ENCODE measurements at regions of chr12 and their contacts with region 1.

Region 1: GRCh38 chr12:123043536-123044001 is 63.1 kb downstream of the ARL6IP4 start:
- DNase-seq: peak; percentile 93 to 97 (median 97)
- H3K4me3 ChIP-seq: peak overlapping the region in 3 of 7 experiments; percentile 6 to 29 (median 26)
- H3K27ac ChIP-seq: peak overlapping the region; percentile 40 to 78
- H3K4me1 ChIP-seq: peaks cover 6 to 52% (median 32%) of the 10 kb centered on the region in 4 experiments
- H3K27me3 ChIP-seq: no peaks in the 10 kb centered on the region

Region 2: DNA sequence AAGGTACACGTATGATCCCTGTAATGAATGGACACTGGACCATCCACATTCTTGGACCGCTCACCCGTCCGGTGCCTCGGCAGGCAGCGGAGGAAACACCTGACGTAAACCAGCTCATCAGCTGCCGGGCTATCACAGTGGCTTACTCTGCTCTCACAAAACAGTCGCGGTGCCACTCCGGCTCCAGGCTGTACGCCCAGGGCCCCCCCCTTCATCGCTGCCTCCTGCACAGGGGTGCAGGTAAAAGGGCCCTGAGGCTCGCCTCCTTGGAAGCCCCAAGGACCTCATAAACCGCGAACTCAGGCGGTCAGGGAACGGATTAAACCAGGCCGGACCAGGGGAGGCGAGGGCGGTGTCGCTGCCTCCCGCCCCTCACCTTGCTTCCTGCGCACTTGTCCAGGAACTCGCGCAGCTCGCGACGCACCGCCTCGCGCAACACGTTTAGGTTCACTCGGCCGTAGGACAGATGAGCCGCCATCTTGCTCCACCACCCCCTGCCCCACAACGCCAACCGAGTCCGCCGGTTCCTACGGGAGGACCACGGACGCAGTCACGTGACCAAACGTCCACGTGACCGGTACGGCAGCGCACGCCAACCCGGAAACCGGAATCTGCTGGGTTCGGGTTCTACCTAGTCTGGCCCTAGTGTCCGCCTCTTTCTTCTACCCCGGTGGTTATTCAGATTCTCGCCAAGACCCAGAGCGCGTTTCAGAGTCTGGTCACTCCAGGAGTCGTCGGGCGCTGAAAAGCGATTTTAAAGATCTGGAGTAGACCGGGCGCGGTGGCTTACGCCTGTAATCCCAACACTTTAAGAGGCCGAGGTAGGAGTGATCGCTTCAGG is 777.4 kb before region 1 on chr12 and contains the start of gene VPS33A:
- CTCF ChIA-PET with region 1: no interaction called
- POLR2A ChIA-PET with region 1: no interaction called
- DNase-seq: peak; percentile 98 to 99 (median 98)
- H3K4me3 ChIP-seq: peak within 1 kb of the TSS; percentile 76 to 99 (median 91)
- H3K27ac ChIP-seq: peak within 1 kb of the TSS; percentile 88 to 94
- H3K4me1 ChIP-seq: peaks cover 11 to 16% (median 13%) of the 10 kb centered on the region in 4 experiments
- H3K27me3 ChIP-seq: no peaks in the 10 kb centered on the region

Region 3: DNA sequence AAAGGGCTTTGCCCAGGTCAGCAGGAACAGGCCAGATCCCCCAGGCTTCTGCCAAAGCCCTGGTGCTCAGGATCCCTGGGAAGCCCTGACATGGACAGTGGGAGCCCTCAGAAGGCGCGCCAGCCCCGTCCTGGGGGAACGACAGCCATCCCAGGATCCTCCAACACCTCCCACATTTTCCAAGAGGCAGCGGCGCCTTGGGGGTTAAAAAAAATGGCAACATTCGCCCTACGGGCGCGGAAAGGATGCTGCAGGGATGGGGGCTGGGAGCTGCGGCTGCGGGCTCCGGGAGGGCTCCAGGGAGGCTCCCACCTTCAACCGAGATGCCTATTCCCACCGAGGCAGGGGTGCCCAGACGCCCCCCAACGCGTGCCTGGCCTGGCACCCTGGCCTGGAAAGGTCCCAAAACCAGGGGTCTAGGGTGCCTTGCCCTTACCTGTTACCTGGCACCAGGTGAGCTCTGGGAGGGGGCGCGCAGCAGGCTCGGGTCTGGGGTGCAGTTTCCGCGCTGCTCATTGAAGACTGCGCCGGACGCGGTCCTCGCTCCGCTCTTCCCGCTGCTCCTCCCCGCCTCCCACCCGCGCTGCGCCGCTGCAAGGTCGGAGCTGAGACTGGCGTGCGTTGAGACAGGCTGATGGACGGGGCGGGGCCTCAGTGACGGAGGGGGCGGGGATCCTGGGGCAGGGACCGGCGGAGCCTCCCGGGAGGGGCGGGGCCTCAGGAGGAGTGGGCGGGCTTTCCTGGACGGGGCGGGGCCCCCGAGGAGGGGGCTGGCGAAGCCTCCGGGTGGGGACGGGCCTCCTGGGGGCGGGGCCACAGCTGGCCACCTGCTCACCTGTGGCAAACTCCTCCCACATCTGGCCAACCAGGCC is 77.5 kb before region 1 on chr12 and contains the start of gene ABCB9:
- CTCF ChIA-PET with region 1: no interaction called
- POLR2A ChIA-PET with region 1: no interaction called
- DNase-seq: peak; percentile 92 to 94 (median 93)
- H3K4me3 ChIP-seq: peak within 1 kb of the TSS in 6 of 7 experiments; percentile 57 to 75 (median 72)
- H3K27ac ChIP-seq: peak within 1 kb of the TSS in 1 of 2 experiments; percentile 49
- H3K4me1 ChIP-seq: peaks cover 0 to 22% (median 13%) of the 10 kb centered on the region in 4 experiments
- H3K27me3 ChIP-seq: no peaks in the 10 kb centered on the region

Region 4: DNA sequence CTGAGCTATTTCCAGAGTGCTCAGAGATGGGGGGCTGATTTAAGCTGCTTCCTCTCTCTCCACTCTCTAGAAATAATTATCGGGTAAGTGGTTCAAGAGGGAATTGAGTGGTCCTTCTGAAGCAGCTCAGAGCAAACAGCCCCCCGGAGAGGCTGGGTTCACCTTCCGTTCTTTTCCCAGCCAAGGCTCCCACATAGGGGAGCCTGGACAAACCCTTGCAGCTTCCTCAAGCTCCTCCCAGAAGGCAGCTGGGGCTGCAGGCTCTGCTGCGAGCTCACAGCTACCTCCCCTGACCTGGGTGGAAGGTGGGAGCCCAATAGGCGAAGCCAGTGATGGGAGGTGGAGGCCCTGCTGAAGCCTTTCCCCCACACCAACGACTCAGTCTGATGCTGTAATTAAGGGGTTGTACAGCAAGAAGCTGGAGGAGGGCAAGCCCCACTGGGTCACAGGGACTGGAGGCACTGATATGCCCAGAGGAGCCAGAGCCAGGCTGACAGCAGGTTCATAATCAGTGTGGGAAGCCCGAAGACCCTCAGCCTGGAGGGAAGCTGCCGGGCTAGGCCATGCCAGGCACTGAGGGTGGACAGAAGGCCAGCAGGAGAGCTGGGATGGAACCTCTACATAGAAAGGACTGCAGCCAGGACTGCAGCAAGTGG is 10.7 kb before region 1 on chr12:
- CTCF ChIA-PET with region 1: interaction called, 18 read pairs
- POLR2A ChIA-PET with region 1: no interaction called
- DNase-seq: peak in 2 of 3 donors; percentile 2 to 28
- H3K4me3 ChIP-seq: peak overlapping the region in 1 of 7 experiments; percentile 19
- H3K27ac ChIP-seq: no peak overlapping the region
- H3K4me1 ChIP-seq: peaks cover 8 to 86% (median 76%) of the 10 kb centered on the region in 4 experiments
- H3K27me3 ChIP-seq: no peaks in the 10 kb centered on the region

Region 5: DNA sequence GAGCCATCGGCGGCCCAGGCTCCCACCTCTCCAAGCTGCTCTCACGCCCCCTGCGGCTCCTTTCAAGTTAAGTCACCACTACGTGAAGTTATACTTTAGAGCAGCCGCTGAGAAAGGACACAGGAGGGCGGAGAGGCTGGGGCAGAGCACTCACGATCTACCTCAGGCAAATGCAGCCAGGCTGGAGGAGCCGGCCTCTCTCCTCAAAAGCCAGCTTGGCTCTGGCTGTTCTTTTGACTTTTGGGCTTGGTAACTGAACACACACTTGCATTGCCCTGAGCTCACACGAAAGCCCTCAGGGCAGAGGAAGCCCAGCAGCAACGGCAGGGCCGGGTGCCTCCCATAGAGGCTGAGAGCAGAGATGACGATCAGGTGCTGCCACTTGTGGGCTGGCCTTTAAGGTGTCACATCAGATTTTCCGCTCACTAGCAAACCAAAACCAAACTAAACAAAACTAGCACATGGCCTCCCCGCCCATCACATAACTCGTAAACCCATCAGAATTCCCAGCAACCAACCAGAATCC is 32.1 kb after region 1 on chr12:
- CTCF ChIA-PET with region 1: interaction called, 40 read pairs
- POLR2A ChIA-PET with region 1: no interaction called
- DNase-seq: no peak
- H3K4me3 ChIP-seq: no peak overlapping the region
- H3K27ac ChIP-seq: no peak overlapping the region
- H3K4me1 ChIP-seq: peaks cover 0 to 26% (median 17%) of the 10 kb centered on the region in 4 experiments
- H3K27me3 ChIP-seq: no peaks in the 10 kb centered on the region

Region 6: DNA sequence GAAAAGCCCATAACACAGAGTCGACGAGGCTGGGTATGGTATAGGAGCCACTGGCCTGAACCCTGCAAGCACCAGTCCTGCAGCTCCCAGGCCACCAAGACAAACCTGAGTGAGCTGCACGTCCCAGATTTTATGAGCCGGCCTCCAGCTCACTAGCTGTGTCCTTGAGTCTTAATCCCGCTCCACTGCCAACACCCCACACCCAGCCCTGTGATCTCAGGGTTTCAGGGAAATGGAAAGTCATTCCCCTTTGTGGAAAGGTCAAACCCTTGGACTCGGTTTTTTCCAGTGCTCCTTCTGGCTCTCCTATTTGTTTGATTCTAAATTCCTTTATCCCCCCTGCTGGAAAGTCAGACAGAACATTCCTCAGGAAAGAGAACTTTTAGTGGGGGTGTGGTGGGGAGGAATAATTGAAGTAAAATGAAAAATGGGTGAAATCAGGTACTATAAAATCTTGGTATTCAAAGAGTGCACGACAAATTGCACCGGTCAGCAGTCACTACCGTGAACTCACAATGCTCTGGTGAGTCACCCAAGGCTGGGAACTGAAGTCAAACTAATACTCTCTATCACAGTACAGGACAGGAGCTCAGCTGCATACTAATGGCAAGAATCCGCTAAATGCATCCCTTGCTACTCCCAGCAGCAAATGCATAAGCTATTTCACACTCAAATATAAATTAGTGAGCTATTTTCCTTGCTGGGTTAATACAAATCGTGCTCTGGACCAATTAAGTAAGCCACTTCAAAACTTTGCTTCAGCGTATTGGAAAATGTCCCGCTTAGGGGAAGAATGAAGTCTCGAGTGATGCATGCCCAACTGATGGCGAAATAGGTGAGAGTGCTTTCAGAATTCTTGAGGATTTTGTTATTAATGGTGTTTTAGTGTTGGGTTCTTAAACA is 98.3 kb after region 1 on chr12:
- CTCF ChIA-PET with region 1: interaction called, 128 read pairs
- POLR2A ChIA-PET with region 1: interaction called, 5 read pairs
- DNase-seq: peak in 1 of 3 donors; percentile 46
- H3K4me3 ChIP-seq: no peak overlapping the region
- H3K27ac ChIP-seq: peak overlapping the region in 1 of 2 experiments; percentile 40
- H3K4me1 ChIP-seq: peaks cover 0 to 47% (median 41%) of the 10 kb centered on the region in 4 experiments
- H3K27me3 ChIP-seq: no peaks in the 10 kb centered on the region

Region 7: GRCh38 chr12:123232807-123233543 is 189.4 kb after region 1 on chr12 and contains the starts of genes MPHOSPH9 and MTRFR:
- CTCF ChIA-PET with region 1: interaction called, 22 read pairs
- POLR2A ChIA-PET with region 1: interaction called, 12 read pairs
- DNase-seq: peak; percentile 99 to 100 (median 100)
- H3K4me3 ChIP-seq: peak within 1 kb of the TSS; percentile 82 to 99 (median 97)
- H3K27ac ChIP-seq: peak within 1 kb of the TSS; percentile 85 to 95
- H3K4me1 ChIP-seq: peaks cover 38 to 65% (median 53%) of the 10 kb centered on the region in 4 experiments
- H3K27me3 ChIP-seq: no peaks in the 10 kb centered on the region

Measured in common myeloid progenitor, CD34-positive (primary cell).